ENCODE measurements at regions of chr22 and their contacts with region 1.

Region 1: GRCh38 chr22:38201710-38202436 is at the start of gene MAFF:
- DNase-seq: peak; percentile 96 to 98 (median 97)
- H3K4me3 ChIP-seq: peak within 1 kb of the TSS; percentile 47 to 79 (median 78)
- H3K4me3 Mint-ChIP-seq: peak within 1 kb of the TSS; percentile 89 to 90
- H3K27ac ChIP-seq: peak within 1 kb of the TSS in 1 of 2 donors; percentile 85
- H3K27ac Mint-ChIP-seq: peak within 1 kb of the TSS; percentile 74 to 94 (median 90)
- H3K4me1 ChIP-seq: peaks cover 21 to 53% of the 10 kb centered on the region in 2 donors
- H3K4me1 Mint-ChIP-seq: peaks cover 34% of the 10 kb centered on the region
- H3K27me3 ChIP-seq: peaks cover 0 to 15% of the 10 kb centered on the region in 2 donors
- H3K27me3 Mint-ChIP-seq: peaks cover 14 to 39% (median 23%) of the 10 kb centered on the region in 3 donors
- CTCF ChIP-seq: no peak
- polyA plus RNA-seq, gene MAFF: 1.5 to 67.3 (median 2.0) TPM

Region 2: GRCh38 chr22:37827056-37827455 is 374.8 kb before region 1 on chr22:
- intact Hi-C with region 1: no loop called
- DNase-seq: no peak
- H3K4me3 ChIP-seq: no peak overlapping the region
- H3K4me3 Mint-ChIP-seq: no peak overlapping the region
- H3K27ac ChIP-seq: no peak overlapping the region
- H3K27ac Mint-ChIP-seq: no peak overlapping the region
- H3K4me1 ChIP-seq: peaks cover 3 to 16% of the 10 kb centered on the region in 2 donors
- H3K4me1 Mint-ChIP-seq: peaks cover 3% of the 10 kb centered on the region
- H3K27me3 ChIP-seq: peaks cover 0 to 13% of the 10 kb centered on the region in 2 donors
- H3K27me3 Mint-ChIP-seq: peaks cover 9 to 22% (median 20%) of the 10 kb centered on the region in 3 donors
- CTCF ChIP-seq: no peak

Region 3: DNA sequence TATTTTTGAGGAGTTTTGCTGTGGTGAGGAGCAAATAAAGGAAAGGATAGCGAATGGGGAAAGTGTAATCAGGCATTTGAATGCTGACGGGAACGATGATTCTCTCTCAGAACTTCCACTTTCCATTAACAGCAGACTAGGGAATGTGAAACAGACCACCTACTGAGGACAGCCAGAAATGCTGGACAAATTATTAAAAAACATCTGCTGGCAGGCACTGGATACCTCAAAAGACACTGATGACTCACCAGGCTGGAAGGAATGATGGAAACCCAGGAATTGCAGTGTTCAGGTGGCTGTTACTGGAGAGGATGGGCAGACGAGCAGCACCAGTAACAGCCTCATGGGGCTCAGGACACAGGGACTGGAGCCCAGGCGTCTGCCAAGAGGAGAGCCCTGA is 53.6 kb before region 1 on chr22:
- intact Hi-C with region 1: loop called in 1 of 2 experiments (anchors 5 kb)
- DNase-seq: peak in 2 of 3 donors; percentile 18 to 65
- H3K4me3 ChIP-seq: peak overlapping the region in 2 of 3 experiments; percentile 3 to 59
- H3K4me3 Mint-ChIP-seq: peak overlapping the region; percentile 66 to 89
- H3K27ac ChIP-seq: peak overlapping the region in 1 of 2 donors; percentile 63
- H3K27ac Mint-ChIP-seq: peak overlapping the region in 6 of 7 donors; percentile 14 to 88 (median 84)
- H3K4me1 ChIP-seq: peaks cover 18 to 19% of the 10 kb centered on the region in 2 donors
- H3K4me1 Mint-ChIP-seq: peaks cover 20% of the 10 kb centered on the region
- H3K27me3 ChIP-seq: no peaks in the 10 kb centered on the region
- H3K27me3 Mint-ChIP-seq: peaks cover 2 to 4% (median 2%) of the 10 kb centered on the region in 3 donors
- CTCF ChIP-seq: no peak

Region 4: GRCh38 chr22:38181453-38182247 is 20.2 kb before region 1 on chr22 and contains the start of gene PLA2G6:
- intact Hi-C with region 1: loop called in 1 of 2 experiments (anchors 2 kb)
- DNase-seq: peak; percentile 99 to 100 (median 99)
- H3K4me3 ChIP-seq: peak within 1 kb of the TSS; percentile 64 to 76 (median 68)
- H3K4me3 Mint-ChIP-seq: peak within 1 kb of the TSS; percentile 86 to 89
- H3K27ac ChIP-seq: peak within 1 kb of the TSS; percentile 87 to 93
- H3K27ac Mint-ChIP-seq: peak within 1 kb of the TSS; percentile 91 to 99 (median 98)
- H3K4me1 ChIP-seq: peaks cover 25 to 40% of the 10 kb centered on the region in 2 donors
- H3K4me1 Mint-ChIP-seq: peaks cover 34% of the 10 kb centered on the region
- H3K27me3 ChIP-seq: no peaks in the 10 kb centered on the region
- H3K27me3 Mint-ChIP-seq: peaks cover 2 to 8% (median 2%) of the 10 kb centered on the region in 3 donors
- CTCF ChIP-seq: no peak
- polyA plus RNA-seq, gene PLA2G6: 0.43 to 8.3 (median 0.62) TPM

Region 5: DNA sequence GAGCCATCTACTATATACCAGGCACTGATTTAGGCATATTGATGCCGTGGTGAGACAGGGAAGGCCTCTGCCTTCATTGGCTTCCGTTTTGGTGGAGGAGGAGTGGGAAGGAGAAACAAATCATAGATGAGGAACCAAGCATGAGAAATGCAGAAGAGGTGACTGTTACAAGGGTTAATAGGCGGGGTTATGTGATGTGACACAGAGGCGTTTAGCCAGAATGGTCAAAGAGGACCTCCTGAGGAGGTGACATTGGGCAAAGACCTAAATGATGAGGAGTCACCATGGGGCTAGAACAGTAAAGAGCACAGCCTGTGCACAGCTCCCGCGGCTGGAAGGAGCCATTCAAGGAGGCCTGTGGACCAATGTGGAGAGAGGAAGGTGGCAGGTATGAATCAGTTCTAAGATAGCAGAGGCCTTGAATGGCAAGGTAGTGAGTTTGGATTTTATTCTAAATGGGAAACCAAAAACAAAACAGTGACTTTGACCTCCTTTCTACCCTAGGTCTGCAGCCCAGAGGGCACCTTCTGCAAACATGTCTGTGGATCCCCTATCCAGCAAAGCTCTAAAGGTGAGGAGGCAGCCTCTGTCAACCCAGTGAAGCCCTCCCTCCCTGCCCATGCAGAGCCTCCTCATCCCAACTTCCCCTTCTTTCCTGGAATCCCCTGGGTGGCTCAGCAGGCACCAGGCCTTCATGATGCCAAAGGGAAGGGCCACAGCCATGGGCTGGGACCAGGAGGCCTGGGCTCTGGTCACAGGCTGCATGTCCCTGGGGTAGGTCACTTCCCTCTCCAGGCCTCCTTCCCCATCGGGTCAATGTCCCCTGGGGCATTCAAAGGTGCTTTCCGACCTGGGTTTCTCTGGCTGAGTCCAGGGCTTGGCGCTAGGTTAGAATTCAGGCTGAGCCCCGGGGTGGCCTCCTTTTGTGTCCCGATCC is 11.7 kb after region 1 on chr22:
- intact Hi-C with region 1: loop called in 1 of 2 experiments (anchors 1 kb)
- DNase-seq: peak; percentile 86 to 87 (median 87)
- H3K4me3 ChIP-seq: peak overlapping the region in 2 of 3 experiments; percentile 16 to 44
- H3K4me3 Mint-ChIP-seq: peak overlapping the region; percentile 60 to 79
- H3K27ac ChIP-seq: peak overlapping the region; percentile 48 to 68
- H3K27ac Mint-ChIP-seq: peak overlapping the region; percentile 84 to 95 (median 88)
- H3K4me1 ChIP-seq: peaks cover 22 to 39% of the 10 kb centered on the region in 2 donors
- H3K4me1 Mint-ChIP-seq: peaks cover 31% of the 10 kb centered on the region
- H3K27me3 ChIP-seq: peaks cover 0 to 3% of the 10 kb centered on the region in 2 donors
- H3K27me3 Mint-ChIP-seq: peaks cover 3 to 15% (median 13%) of the 10 kb centered on the region in 3 donors
- CTCF ChIP-seq: no peak

Measured in CD14-positive monocyte (primary cell).